IMR-90 (cell line): ENCODE measurements at regions of chr1 and their contacts with region 1.

Region 1: DNA sequence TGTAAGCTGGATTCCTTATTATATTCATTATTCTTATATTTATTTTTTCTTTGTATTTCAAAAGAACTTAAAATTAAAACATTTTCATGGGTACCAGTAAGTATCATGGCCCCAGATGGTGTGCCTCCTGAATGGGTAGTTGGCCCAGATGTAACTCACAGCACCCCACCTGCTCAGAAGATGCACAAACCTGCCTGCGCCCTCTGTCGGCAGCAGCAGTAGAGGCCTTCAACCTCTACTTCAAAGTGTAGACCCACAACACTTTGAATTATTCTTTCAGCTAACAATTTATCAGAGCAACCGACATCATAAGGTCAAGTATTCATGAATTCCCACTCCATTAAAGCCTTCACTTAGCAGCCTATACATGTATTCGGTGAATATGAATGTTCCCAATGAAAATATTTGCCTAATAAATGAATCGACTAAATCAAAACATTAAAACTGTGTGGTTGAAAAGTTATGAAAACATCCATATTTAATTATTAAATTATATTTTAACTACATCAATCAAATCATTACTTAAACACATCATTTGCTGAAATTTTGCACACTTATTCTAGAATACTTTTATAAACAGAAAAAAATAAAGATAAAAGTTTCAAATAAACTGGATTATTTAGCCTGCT is 25.4 kb downstream of the PIGM start:
- DNase-seq: peak; percentile 62
- ATAC-seq: peak; percentile 76
- H3K4me3 ChIP-seq: no peak overlapping the region
- H3K27ac ChIP-seq: no peak overlapping the region
- H3K4me1 ChIP-seq: no peaks in the 10 kb centered on the region
- H3K27me3 ChIP-seq: peaks cover 31% of the 10 kb centered on the region
- CTCF ChIP-seq: peak; percentile 87
- POLR2A ChIP-seq: no peak
- RAD21 ChIP-seq: peak; percentile 74

Region 2: GRCh38 chr1:159780583-159781582 is 225.5 kb before region 1 on chr1 and contains the start of gene DUSP23:
- CTCF ChIA-PET with region 1: interaction called, 5 read pairs
- POLR2A ChIA-PET with region 1: no interaction called
- dilution Hi-C with region 1: no loop called
- in situ Hi-C with region 1: loop called (anchors 10 kb)
- intact Hi-C with region 1: loop called (anchors 5 kb)
- DNase-seq: peak; percentile 96
- ATAC-seq: peak; percentile 99
- H3K4me3 ChIP-seq: peak within 1 kb of the TSS; percentile 60
- H3K27ac ChIP-seq: no peak within 1 kb of the TSS
- H3K4me1 ChIP-seq: no peaks in the 10 kb centered on the region
- H3K27me3 ChIP-seq: no peaks in the 10 kb centered on the region
- CTCF ChIP-seq: peak; percentile 96
- POLR2A ChIP-seq: no peak
- RAD21 ChIP-seq: peak; percentile 80
- total RNA-seq, gene DUSP23: 4.1 and 4.2 TPM in 2 replicates

Region 3: GRCh38 chr1:159924981-159925712 is 81.3 kb before region 1 on chr1 and contains the start of gene TAGLN2:
- CTCF ChIA-PET with region 1: interaction called, 7 read pairs
- POLR2A ChIA-PET with region 1: interaction called, 16 read pairs
- dilution Hi-C with region 1: no loop called
- in situ Hi-C with region 1: no loop called
- intact Hi-C with region 1: no loop called
- DNase-seq: peak; percentile 90
- ATAC-seq: peak; percentile 82
- H3K4me3 ChIP-seq: peak within 1 kb of the TSS; percentile 83
- H3K27ac ChIP-seq: peak within 1 kb of the TSS; percentile 90
- H3K4me1 ChIP-seq: peaks cover 15% of the 10 kb centered on the region
- H3K27me3 ChIP-seq: no peaks in the 10 kb centered on the region
- CTCF ChIP-seq: no peak
- POLR2A ChIP-seq: peak; percentile 97
- RAD21 ChIP-seq: no peak
- total RNA-seq, gene TAGLN2: 365 and 440 TPM in 2 replicates

Region 4: DNA sequence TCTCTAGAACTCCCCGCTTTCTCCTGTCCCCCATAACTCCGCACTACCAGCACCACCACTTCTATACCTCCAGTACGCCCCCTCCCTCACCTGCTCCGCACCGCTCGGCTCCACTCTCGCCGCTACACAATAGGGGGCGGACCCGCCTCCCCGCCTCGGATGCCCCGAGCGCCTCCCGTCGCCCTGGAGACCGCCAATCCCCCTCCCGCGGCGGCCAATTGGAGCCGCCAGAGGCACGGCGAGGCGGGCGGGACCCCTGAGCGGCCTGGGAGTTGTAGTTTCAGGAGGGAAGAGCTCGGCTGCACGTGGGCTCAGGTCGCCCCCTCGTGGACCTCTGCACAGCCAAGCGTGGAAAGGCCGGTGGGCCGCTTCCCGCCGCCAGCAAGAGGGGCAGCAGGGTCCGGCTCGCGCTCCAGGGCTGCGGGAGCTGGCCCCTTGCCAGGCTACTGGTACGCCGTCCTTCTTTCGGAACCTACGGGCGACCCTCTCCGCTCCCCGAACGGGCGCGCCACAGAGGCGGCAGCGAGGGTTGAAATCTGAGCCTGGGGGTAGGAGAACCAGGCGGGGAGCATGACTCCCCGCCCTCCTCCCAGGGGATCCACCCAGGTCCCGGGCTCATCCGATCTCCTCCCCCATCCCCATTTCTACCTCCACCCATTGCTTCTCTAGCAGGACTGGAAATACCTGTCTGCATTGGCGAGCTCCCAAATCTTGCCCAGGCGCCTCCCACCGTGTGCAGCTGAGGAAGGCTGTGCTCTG is 60.8 kb before region 1 on chr1 and contains the start of gene IGSF9:
- CTCF ChIA-PET with region 1: interaction called, 48 read pairs
- POLR2A ChIA-PET with region 1: no interaction called
- dilution Hi-C with region 1: no loop called
- in situ Hi-C with region 1: no loop called
- intact Hi-C with region 1: loop called (anchors 2 kb)
- DNase-seq: peak; percentile 49
- ATAC-seq: peak; percentile 96
- H3K4me3 ChIP-seq: peak within 1 kb of the TSS; percentile 34
- H3K27ac ChIP-seq: no peak within 1 kb of the TSS
- H3K4me1 ChIP-seq: no peaks in the 10 kb centered on the region; the same call in 1 of the 2 replicates
- H3K27me3 ChIP-seq: peaks cover 61% of the 10 kb centered on the region
- CTCF ChIP-seq: peak; percentile 39
- POLR2A ChIP-seq: no peak
- RAD21 ChIP-seq: peak; percentile 42
- total RNA-seq, gene IGSF9: not detected in 2 replicates

Region 5: GRCh38 chr1:160124705-160125478 is 118.5 kb after region 1 on chr1:
- CTCF ChIA-PET with region 1: no interaction called
- POLR2A ChIA-PET with region 1: no interaction called
- dilution Hi-C with region 1: no loop called
- in situ Hi-C with region 1: no loop called
- intact Hi-C with region 1: no loop called
- DNase-seq: peak; percentile 89
- ATAC-seq: peak; percentile 83
- H3K4me3 ChIP-seq: no peak overlapping the region
- H3K27ac ChIP-seq: peak overlapping the region; percentile 21; the same call in 1 of the 2 replicates
- H3K4me1 ChIP-seq: peaks cover 17% of the 10 kb centered on the region
- H3K27me3 ChIP-seq: no peaks in the 10 kb centered on the region
- CTCF ChIP-seq: peak; percentile 46
- POLR2A ChIP-seq: no peak
- RAD21 ChIP-seq: no peak